ENCODE measurements at regions of chr12 and their contacts with region 1.

Region 1: DNA sequence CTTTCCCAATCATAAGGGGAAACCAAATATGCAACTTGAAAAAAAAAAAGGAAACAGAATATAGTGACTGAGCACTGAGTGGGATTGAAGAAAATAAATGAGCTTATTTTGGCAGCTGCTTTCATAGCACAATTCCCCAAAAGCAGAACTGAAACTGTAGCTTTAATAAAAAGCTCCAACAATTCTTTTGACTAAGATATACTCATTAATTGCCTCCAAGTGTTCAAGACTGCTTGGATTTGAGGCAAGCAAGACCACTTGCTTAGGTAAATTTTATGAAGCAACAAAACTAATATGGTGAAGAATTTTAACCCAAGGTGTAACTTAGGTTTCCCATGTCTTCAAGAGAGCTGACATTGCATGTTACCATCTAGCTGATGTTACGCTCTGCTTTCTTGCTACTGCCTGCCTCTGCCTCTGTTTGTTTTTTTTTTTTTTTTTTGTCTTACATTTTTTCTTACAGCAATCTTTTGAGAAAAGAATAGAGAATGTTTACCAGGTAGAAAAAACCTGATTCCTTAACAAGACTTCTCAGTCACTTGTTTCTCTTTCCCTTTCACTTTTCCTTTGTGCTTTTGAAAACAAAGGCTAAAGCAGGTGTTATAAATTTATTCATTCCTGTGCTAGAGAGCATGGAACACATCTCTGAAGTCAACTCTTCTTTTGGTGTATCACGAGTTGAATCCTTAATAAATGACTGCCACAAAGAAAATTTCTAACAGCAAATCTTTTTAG is 134.4 kb downstream of the BCAT1 start:
- DNase-seq: peak; percentile 75
- ATAC-seq: peak; percentile 86
- H3K4me3 ChIP-seq: peak overlapping the region; percentile 33 to 70 (median 51)
- H3K4me3 Mint-ChIP-seq: peak overlapping the region; percentile 84
- H3K27ac ChIP-seq: peak overlapping the region; percentile 48 to 67
- H3K27ac Mint-ChIP-seq: peak overlapping the region; percentile 85
- H3K4me1 ChIP-seq: peaks cover 5 to 16% of the 10 kb centered on the region in 2 donors
- H3K4me1 Mint-ChIP-seq: peaks cover 32% of the 10 kb centered on the region
- H3K27me3 ChIP-seq: no peaks in the 10 kb centered on the region
- H3K27me3 Mint-ChIP-seq: no peaks in the 10 kb centered on the region
- CTCF ChIP-seq: no peak

Region 2: GRCh38 chr12:24728366-24728765 is 86.2 kb before region 1 on chr12:
- CTCF ChIA-PET with region 1: no interaction called
- POLR2A ChIA-PET with region 1: no interaction called
- intact Hi-C with region 1: loop called (anchors 5 kb)
- DNase-seq: peak; percentile 50
- ATAC-seq: no peak
- H3K4me3 ChIP-seq: no peak overlapping the region
- H3K4me3 Mint-ChIP-seq: peak overlapping the region; percentile 17
- H3K27ac ChIP-seq: no peak overlapping the region
- H3K27ac Mint-ChIP-seq: no peak overlapping the region
- H3K4me1 ChIP-seq: peaks cover 22 to 23% of the 10 kb centered on the region in 2 donors
- H3K4me1 Mint-ChIP-seq: peaks cover 57% of the 10 kb centered on the region
- H3K27me3 ChIP-seq: no peaks in the 10 kb centered on the region
- H3K27me3 Mint-ChIP-seq: no peaks in the 10 kb centered on the region
- CTCF ChIP-seq: peak; percentile 76

Region 3: DNA sequence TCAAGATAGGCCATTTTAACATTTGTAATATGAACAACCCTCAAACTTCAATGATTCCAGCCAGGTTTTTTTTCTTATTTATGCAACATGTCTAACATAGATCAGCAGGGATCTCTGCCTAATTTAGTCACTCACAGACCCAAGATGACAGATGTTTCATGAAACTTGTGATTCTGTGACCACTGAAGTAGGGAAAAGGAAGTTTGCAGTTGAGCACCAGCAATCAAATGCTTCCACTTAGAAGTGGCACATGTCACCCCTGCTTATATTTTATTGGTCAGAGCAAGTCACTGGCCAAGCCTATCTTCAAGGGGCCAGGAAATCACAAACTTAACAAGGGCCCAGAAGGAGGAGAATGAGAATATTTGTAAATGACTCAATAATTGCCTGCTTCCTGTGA is 16.2 kb before region 1 on chr12:
- CTCF ChIA-PET with region 1: interaction called, 3 read pairs
- POLR2A ChIA-PET with region 1: interaction called, 4 read pairs
- intact Hi-C with region 1: loop called (anchors 1 kb)
- DNase-seq: peak; percentile 72
- ATAC-seq: peak; percentile 83
- H3K4me3 ChIP-seq: no peak overlapping the region
- H3K4me3 Mint-ChIP-seq: peak overlapping the region; percentile 50
- H3K27ac ChIP-seq: peak overlapping the region; percentile 71 to 87
- H3K27ac Mint-ChIP-seq: peak overlapping the region; percentile 79
- H3K4me1 ChIP-seq: peaks cover 29 to 35% of the 10 kb centered on the region in 2 donors
- H3K4me1 Mint-ChIP-seq: peaks cover 41% of the 10 kb centered on the region
- H3K27me3 ChIP-seq: no peaks in the 10 kb centered on the region
- H3K27me3 Mint-ChIP-seq: no peaks in the 10 kb centered on the region
- CTCF ChIP-seq: no peak

Measured in B cell (primary cell).